Mammary epithelial cell (primary cell): ENCODE measurements at regions of chr6 and their contacts with region 1.

Region 1: DNA sequence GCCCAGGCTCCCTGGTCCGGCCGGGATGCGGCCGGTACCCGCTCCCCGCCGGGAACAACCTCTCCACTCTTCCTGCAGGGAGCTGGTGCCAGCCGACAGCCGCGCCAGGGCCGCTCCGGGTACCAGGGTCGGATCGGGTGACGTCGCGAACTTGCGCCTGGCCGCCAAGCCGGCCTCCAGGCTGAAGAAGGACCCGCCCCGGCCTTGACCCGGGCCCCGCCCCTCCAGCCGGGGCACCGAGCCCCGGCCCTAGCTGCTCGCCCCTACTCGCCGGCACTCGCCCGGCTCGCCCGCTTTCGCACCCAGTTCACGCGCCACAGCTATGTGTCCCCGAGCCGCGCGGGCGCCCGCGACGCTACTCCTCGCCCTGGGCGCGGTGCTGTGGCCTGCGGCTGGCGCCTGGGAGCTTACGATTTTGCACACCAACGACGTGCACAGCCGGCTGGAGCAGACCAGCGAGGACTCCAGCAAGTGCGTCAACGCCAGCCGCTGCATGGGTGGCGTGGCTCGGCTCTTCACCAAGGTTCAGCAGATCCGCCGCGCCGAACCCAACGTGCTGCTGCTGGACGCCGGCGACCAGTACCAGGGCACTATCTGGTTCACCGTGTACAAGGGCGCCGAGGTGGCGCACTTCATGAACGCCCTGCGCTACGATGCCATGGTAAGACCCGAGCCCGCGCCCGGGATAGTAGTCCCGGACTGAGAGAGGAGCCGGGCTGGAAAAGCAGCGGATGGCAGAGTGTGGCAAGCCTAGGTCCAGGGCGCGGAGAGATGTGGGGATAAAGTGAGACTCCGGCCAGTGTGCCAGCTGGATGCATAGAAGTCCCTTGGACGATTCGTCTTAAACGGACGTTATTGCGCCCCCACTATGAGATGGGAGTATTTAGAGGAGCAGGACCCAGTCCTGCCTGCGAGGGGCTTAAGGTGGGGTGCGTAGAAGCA is at the start of gene NT5E:
- DNase-seq: peak; percentile 77
- H3K4me3 ChIP-seq: peak within 1 kb of the TSS; percentile 71 to 87 (median 75)
- H3K27ac ChIP-seq: peak within 1 kb of the TSS; percentile 84
- H3K4me1 ChIP-seq: peaks cover 38% of the 10 kb centered on the region
- H3K27me3 ChIP-seq: no peaks in the 10 kb centered on the region
- CTCF ChIP-seq: peak in 1 of 2 donors; percentile 11
- total RNA-seq, gene NT5E: 74.2 to 228 TPM

Region 2: GRCh38 chr6:85354761-85355618 is 95.1 kb before region 1 on chr6:
- CTCF ChIA-PET with region 1: no interaction called
- dilution Hi-C with region 1: loop called (anchors 5 kb)
- in situ Hi-C with region 1: no loop called
- intact Hi-C with region 1: loop called (anchors 1 kb)
- DNase-seq: peak; percentile 64
- H3K4me3 ChIP-seq: no peak overlapping the region
- H3K27ac ChIP-seq: no peak overlapping the region
- H3K4me1 ChIP-seq: peaks cover 6% of the 10 kb centered on the region
- H3K27me3 ChIP-seq: no peaks in the 10 kb centered on the region
- CTCF ChIP-seq: peak; percentile 91 to 96

Region 3: DNA sequence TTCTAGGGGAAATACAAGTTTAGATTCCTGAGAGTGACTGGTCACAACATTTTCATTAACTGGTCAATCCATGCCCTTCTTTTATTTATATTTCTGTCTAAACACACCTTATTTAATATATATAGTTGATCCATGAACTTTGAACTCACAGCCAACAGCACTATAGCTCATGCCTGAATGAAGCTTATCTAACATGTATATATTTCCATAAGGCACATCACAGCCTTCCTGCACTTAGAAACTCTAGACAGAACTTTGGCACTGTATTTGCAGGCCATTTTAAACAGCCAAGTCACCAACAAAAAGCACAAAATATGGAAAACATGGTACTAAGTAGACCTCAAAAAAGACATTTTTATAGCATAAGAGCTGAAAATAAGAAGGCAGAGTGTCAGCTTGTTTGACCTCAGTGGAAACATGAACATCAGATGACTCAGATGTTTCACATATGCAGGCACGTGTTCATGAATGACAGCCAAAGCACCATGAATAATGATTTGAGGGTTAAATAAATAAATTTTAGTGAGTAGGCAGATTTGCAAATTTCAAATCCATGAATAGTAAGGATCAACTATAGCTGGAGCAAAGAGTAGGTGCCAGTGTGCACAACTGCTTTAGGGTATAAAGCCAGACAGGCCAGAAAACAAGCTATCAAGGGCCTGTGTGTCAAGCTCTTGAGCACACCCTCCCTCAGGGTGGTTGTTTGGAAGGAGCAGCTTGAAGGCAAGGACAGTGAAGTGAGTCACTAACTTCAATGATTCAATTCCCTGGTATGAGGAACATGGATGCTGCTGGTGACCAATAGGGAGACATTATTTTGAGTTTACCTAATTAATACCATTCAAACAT is 89.1 kb before region 1 on chr6:
- CTCF ChIA-PET with region 1: interaction called, 5 read pairs
- dilution Hi-C with region 1: loop called (anchors 5 kb)
- in situ Hi-C with region 1: no loop called
- intact Hi-C with region 1: loop called (anchors 1 kb)
- DNase-seq: peak; percentile 93
- H3K4me3 ChIP-seq: no peak overlapping the region
- H3K27ac ChIP-seq: peak overlapping the region; percentile 83
- H3K4me1 ChIP-seq: peaks cover 44% of the 10 kb centered on the region
- H3K27me3 ChIP-seq: no peaks in the 10 kb centered on the region
- CTCF ChIP-seq: no peak

Region 4: GRCh38 chr6:85460921-85461797 is 11.1 kb after region 1 on chr6:
- CTCF ChIA-PET with region 1: no interaction called
- dilution Hi-C with region 1: no loop called
- in situ Hi-C with region 1: no loop called
- intact Hi-C with region 1: loop called (anchors 1 kb)
- DNase-seq: peak; percentile 86
- H3K4me3 ChIP-seq: no peak overlapping the region
- H3K27ac ChIP-seq: peak overlapping the region; percentile 61
- H3K4me1 ChIP-seq: peaks cover 100% of the 10 kb centered on the region
- H3K27me3 ChIP-seq: no peaks in the 10 kb centered on the region
- CTCF ChIP-seq: no peak